Common myeloid progenitor, CD34-positive (primary cell): ENCODE measurements at regions of chr7 and their contacts with region 1.

Region 1: DNA sequence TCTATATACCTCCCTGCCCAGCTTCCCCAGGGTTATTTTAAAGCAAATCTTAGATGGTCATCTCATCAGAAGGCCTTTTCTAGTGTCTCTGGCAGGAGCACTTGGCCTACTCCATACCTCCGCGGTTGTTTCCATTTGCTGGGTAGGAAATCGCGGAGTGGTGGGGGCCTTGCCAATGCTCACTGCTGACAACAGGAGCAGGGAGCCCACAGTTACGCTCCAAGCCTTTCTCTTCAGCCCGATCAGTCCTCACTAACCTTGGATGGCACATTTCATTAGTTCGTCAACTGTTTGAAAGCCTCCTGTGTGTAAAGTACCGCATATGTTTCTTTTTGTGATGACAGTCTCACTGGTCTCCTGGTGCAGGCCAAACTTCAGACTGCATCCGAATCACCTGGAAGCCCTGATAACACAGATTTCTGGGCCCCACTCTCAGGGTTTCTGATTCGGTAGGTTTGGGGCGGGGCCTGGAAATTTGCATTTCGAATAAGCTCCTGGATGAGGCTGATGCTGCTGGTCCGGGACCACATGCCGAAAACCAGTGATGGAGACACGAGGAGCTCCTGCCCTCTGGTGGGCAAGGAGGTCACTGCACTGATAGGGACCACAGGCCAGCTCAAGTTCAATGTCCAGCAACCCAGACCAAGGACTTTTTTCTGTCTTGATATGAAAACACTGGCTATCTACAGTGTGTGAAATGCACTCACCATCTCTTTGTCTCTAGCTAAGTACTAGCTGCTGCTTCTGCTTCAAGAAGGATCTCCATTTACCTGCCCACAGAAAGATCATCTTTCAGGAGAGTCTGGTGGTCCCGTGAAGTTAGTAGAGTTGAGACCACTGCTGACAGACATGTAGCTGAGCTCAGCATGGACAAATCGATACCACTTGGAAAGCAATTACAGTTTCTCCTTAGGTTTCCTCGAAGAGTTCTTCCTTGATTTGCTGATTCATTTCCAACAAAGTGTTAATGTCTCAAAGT is 14.0 kb downstream of the LRGUK start:
- DNase-seq: peak; percentile 25 to 46 (median 43)
- H3K4me3 ChIP-seq: no peak overlapping the region
- H3K27ac ChIP-seq: no peak overlapping the region
- H3K4me1 ChIP-seq: no peaks in the 10 kb centered on the region
- H3K27me3 ChIP-seq: no peaks in the 10 kb centered on the region

Region 2: GRCh38 chr7:134126966-134127848 is 14.0 kb before region 1 on chr7 and contains the start of gene LRGUK:
- CTCF ChIA-PET with region 1: interaction called, 17 read pairs
- POLR2A ChIA-PET with region 1: no interaction called
- DNase-seq: peak; percentile 76 to 89 (median 87)
- H3K4me3 ChIP-seq: peak within 1 kb of the TSS; percentile 73 to 96 (median 89)
- H3K27ac ChIP-seq: peak within 1 kb of the TSS in 1 of 2 experiments; percentile 15
- H3K4me1 ChIP-seq: peaks cover 6 to 12% (median 11%) of the 10 kb centered on the region in 4 experiments
- H3K27me3 ChIP-seq: peaks cover 0 to 4% (median 2%) of the 10 kb centered on the region in 5 experiments

Region 3: GRCh38 chr7:134364619-134365037 is 223.4 kb after region 1 on chr7:
- CTCF ChIA-PET with region 1: no interaction called
- POLR2A ChIA-PET with region 1: no interaction called
- DNase-seq: no peak
- H3K4me3 ChIP-seq: no peak overlapping the region
- H3K27ac ChIP-seq: no peak overlapping the region
- H3K4me1 ChIP-seq: no peaks in the 10 kb centered on the region
- H3K27me3 ChIP-seq: peaks cover 0 to 2% (median 0%) of the 10 kb centered on the region in 5 experiments